ENCODE measurements at regions of chr4 and their contacts with region 1.

Region 1: DNA sequence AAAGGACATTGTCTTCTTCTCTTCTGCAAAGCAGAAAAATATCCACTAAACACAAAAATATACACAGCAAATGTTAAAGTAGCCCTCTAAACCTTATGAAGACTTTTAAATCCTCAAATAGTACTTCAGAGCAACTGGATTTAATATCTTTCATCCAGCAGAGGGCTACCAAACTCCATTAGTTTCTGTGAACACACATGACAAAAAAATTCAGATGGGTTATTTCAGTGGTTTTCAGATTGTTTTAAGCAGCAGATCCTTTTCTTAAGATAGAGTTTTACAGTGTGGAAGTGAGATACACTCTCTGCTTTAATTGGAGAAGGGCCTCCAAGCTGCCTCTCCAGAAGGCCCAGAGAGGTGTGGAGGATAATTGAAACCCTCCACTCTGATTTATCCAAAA is 56.7 kb downstream of the ANK2 start:
- DNase-seq: peak in 1 of 2 experiments; percentile 41
- H3K4me3 ChIP-seq: no peak overlapping the region
- H3K4me3 Mint-ChIP-seq: no peak overlapping the region
- H3K27ac Mint-ChIP-seq: no peak overlapping the region
- H3K4me1 ChIP-seq: peaks cover 29% of the 10 kb centered on the region
- H3K4me1 Mint-ChIP-seq: peaks cover 20% of the 10 kb centered on the region
- H3K27me3 ChIP-seq: no peaks in the 10 kb centered on the region
- H3K27me3 Mint-ChIP-seq: no peaks in the 10 kb centered on the region
- CTCF ChIP-seq: peak; percentile 41 to 50

Region 2: DNA sequence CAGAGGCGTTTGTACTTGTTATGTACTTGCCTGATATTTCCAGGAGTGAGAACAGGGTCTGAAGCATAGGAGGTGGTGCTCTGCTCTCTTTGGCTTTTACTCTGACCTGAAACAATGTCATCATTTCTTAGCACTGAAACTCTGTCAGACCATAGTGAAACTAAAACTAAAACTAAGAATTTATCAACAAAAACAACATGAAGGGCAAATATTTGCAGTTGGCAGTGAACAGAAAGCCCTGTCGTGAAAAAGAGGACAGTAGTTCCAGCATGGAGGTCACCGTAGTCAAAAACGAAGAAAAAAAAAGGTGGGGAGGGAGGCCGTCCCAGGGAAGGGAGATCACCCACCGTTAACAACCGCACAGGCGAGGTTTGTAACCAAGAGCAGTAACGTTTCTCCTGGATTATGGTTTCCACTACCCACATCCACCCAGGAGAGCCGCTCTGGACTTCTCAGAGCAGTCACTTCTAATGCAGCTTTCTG is 40.8 kb after region 1 on chr4:
- CTCF ChIA-PET with region 1: no interaction called
- POLR2A ChIA-PET with region 1: no interaction called
- intact Hi-C with region 1: loop called (anchors 1 kb)
- DNase-seq: peak; percentile 33 to 42
- H3K4me3 ChIP-seq: peak overlapping the region; percentile 32
- H3K4me3 Mint-ChIP-seq: peak overlapping the region; percentile 83
- H3K27ac Mint-ChIP-seq: peak overlapping the region; percentile 93
- H3K4me1 ChIP-seq: peaks cover 58% of the 10 kb centered on the region
- H3K4me1 Mint-ChIP-seq: peaks cover 29% of the 10 kb centered on the region
- H3K27me3 ChIP-seq: no peaks in the 10 kb centered on the region
- H3K27me3 Mint-ChIP-seq: no peaks in the 10 kb centered on the region
- CTCF ChIP-seq: no peak

Region 3: GRCh38 chr4:113153529-113154101 is 47.5 kb after region 1 on chr4:
- CTCF ChIA-PET with region 1: interaction called, 7 read pairs
- POLR2A ChIA-PET with region 1: interaction called, 5 read pairs
- intact Hi-C with region 1: loop called (anchors 1 kb)
- DNase-seq: peak; percentile 37 to 58
- H3K4me3 ChIP-seq: no peak overlapping the region
- H3K4me3 Mint-ChIP-seq: no peak overlapping the region
- H3K27ac Mint-ChIP-seq: no peak overlapping the region
- H3K4me1 ChIP-seq: peaks cover 18% of the 10 kb centered on the region
- H3K4me1 Mint-ChIP-seq: peaks cover 8% of the 10 kb centered on the region
- H3K27me3 ChIP-seq: no peaks in the 10 kb centered on the region
- H3K27me3 Mint-ChIP-seq: no peaks in the 10 kb centered on the region
- CTCF ChIP-seq: peak in 1 of 2 experiments; percentile 19

Region 4: GRCh38 chr4:113179996-113180395 is 73.9 kb after region 1 on chr4:
- CTCF ChIA-PET with region 1: interaction called, 4 read pairs
- POLR2A ChIA-PET with region 1: no interaction called
- intact Hi-C with region 1: loop called (anchors 1 kb)
- DNase-seq: no peak
- H3K4me3 ChIP-seq: no peak overlapping the region
- H3K4me3 Mint-ChIP-seq: no peak overlapping the region
- H3K27ac Mint-ChIP-seq: no peak overlapping the region
- H3K4me1 ChIP-seq: peaks cover 41% of the 10 kb centered on the region
- H3K4me1 Mint-ChIP-seq: peaks cover 7% of the 10 kb centered on the region
- H3K27me3 ChIP-seq: no peaks in the 10 kb centered on the region
- H3K27me3 Mint-ChIP-seq: no peaks in the 10 kb centered on the region
- CTCF ChIP-seq: no peak

Region 5: GRCh38 chr4:113248320-113248719 is 142.2 kb after region 1 on chr4:
- CTCF ChIA-PET with region 1: interaction called, 5 read pairs
- POLR2A ChIA-PET with region 1: no interaction called
- intact Hi-C with region 1: loop called (anchors 1 kb)
- DNase-seq: peak in 1 of 2 experiments; percentile 43
- H3K4me3 ChIP-seq: no peak overlapping the region
- H3K4me3 Mint-ChIP-seq: no peak overlapping the region
- H3K27ac Mint-ChIP-seq: no peak overlapping the region
- H3K4me1 ChIP-seq: no peaks in the 10 kb centered on the region
- H3K4me1 Mint-ChIP-seq: no peaks in the 10 kb centered on the region
- H3K27me3 ChIP-seq: no peaks in the 10 kb centered on the region
- H3K27me3 Mint-ChIP-seq: no peaks in the 10 kb centered on the region
- CTCF ChIP-seq: peak; percentile 19 to 23

Region 6: GRCh38 chr4:113278324-113278934 is 172.3 kb after region 1 on chr4:
- CTCF ChIA-PET with region 1: no interaction called
- POLR2A ChIA-PET with region 1: no interaction called
- intact Hi-C with region 1: loop called (anchors 1 kb)
- DNase-seq: peak; percentile 67 to 73
- H3K4me3 ChIP-seq: no peak overlapping the region
- H3K4me3 Mint-ChIP-seq: no peak overlapping the region
- H3K27ac Mint-ChIP-seq: no peak overlapping the region
- H3K4me1 ChIP-seq: no peaks in the 10 kb centered on the region
- H3K4me1 Mint-ChIP-seq: no peaks in the 10 kb centered on the region
- H3K27me3 ChIP-seq: no peaks in the 10 kb centered on the region
- H3K27me3 Mint-ChIP-seq: no peaks in the 10 kb centered on the region
- CTCF ChIP-seq: peak; percentile 77 to 78

Region 7: GRCh38 chr4:113328514-113328913 is 222.4 kb after region 1 on chr4:
- CTCF ChIA-PET with region 1: no interaction called
- POLR2A ChIA-PET with region 1: no interaction called
- intact Hi-C with region 1: loop called (anchors 1 kb)
- DNase-seq: peak; percentile 38 to 48
- H3K4me3 ChIP-seq: no peak overlapping the region
- H3K4me3 Mint-ChIP-seq: no peak overlapping the region
- H3K27ac Mint-ChIP-seq: no peak overlapping the region
- H3K4me1 ChIP-seq: peaks cover 13% of the 10 kb centered on the region
- H3K4me1 Mint-ChIP-seq: peaks cover 11% of the 10 kb centered on the region
- H3K27me3 ChIP-seq: no peaks in the 10 kb centered on the region
- H3K27me3 Mint-ChIP-seq: no peaks in the 10 kb centered on the region
- CTCF ChIP-seq: peak in 1 of 2 experiments; percentile 23